Tibial artery (tissue), 4 donors: ENCODE measurements at regions of chr18 and their contacts with region 1.

Region 1: GRCh38 chr18:23240609-23240930 is 105.3 kb downstream of the CABLES1 start:
- DNase-seq: no peak
- H3K4me3 ChIP-seq: no peak overlapping the region
- H3K27ac ChIP-seq: no peak overlapping the region
- H3K4me1 ChIP-seq: peaks cover 0 to 27% (median 20%) of the 10 kb centered on the region in 4 donors
- H3K27me3 ChIP-seq: no peaks in the 10 kb centered on the region
- CTCF ChIP-seq: no peak

Region 2: GRCh38 chr18:23196119-23197007 is 44.2 kb before region 1 on chr18:
- intact Hi-C with region 1: loop called (anchors 2 kb)
- DNase-seq: no peak
- H3K4me3 ChIP-seq: no peak overlapping the region
- H3K27ac ChIP-seq: no peak overlapping the region
- H3K4me1 ChIP-seq: peaks cover 0 to 17% (median 0%) of the 10 kb centered on the region in 4 donors
- H3K27me3 ChIP-seq: no peaks in the 10 kb centered on the region
- CTCF ChIP-seq: no peak

Region 3: DNA sequence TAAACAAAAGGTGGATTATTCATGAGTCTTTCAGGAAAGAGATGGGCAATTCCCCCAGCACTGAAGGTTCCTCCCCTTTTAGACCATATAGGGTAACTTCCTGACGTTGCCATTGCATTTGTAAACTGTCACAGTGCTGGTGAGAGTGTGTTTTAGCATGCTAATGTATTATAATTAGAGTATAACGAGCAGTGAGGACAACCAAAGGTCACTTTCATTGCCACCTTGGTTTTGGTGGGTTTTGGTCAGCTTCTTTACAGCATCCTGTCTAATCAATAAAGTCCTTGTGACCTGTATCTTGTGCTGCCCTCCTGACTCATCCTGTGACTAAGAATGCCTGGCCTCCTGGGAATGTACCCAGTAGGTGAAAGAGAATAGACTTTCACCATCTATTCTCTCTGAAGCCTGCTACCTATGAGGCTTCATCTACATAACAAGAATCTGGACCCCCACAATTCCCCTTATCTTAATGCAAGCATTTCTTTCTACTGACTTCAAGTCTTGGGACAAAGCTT is 43.4 kb after region 1 on chr18:
- intact Hi-C with region 1: no loop called
- DNase-seq: no peak
- H3K4me3 ChIP-seq: no peak overlapping the region
- H3K27ac ChIP-seq: no peak overlapping the region
- H3K4me1 ChIP-seq: peaks cover 0 to 13% (median 0%) of the 10 kb centered on the region in 4 donors
- H3K27me3 ChIP-seq: no peaks in the 10 kb centered on the region
- CTCF ChIP-seq: no peak